ENCODE measurements at regions of chr1 and their contacts with region 1.

Region 1: DNA sequence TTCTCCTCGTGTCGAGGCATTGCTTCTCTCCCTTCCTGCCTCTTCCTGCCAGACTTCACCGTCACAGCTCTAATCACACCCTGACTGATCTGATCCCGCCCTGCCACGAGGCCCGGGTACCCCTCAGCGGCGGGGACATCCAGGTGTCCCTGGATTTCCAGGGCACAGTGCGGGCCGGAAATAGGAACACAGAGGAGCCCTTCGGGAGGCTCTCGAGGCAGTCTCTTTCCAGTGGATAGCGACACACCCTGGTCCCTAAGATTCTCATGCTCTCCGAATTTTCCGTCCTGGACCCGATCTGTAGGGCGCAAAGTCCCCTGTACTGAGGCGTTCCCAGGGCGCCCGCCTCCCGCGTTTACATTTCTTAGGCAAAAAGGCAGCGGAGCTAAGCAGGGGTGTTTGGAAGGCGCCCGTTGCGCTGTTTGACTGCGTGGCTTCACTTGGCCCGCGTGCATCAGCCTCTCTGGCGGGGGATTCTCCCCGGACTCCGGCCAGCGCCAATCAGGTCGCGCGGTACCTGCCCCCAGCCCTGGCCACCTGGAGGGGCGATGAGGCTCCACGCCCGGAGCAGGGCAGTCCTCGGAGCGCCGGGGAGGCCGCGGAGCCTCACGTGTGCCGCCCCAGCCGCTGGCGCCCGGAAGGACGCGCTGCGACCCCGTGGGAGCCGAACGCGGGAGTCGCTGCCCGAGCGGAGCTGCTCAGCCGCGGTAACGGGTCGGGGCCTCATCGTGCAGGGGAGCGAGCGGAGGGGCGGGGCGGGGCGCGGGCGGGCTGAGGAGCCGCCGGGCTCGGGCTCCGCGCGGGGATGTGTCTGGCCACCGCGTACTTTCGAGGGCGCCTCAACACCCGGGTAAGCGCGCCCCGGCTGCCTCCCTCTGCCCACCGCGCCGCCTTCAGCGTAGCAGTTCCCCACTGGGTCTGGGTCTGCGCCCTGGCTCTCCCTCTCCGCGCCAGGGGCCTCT is at the start of gene FAM163A:
- DNase-seq: no peak
- H3K4me3 Mint-ChIP-seq: peak within 1 kb of the TSS; percentile 69
- H3K27ac Mint-ChIP-seq: no peak within 1 kb of the TSS
- H3K4me1 Mint-ChIP-seq: peaks cover 9% of the 10 kb centered on the region
- H3K27me3 Mint-ChIP-seq: peaks cover 71% of the 10 kb centered on the region
- total RNA-seq, gene FAM163A: not detected in 2 replicates

Region 2: GRCh38 chr1:179917601-179918429 is 174.8 kb after region 1 on chr1:
- intact Hi-C with region 1: no loop called
- DNase-seq: no peak
- H3K4me3 Mint-ChIP-seq: no peak overlapping the region
- H3K27ac Mint-ChIP-seq: no peak overlapping the region
- H3K4me1 Mint-ChIP-seq: peaks cover 2% of the 10 kb centered on the region
- H3K27me3 Mint-ChIP-seq: no peaks in the 10 kb centered on the region

Region 3: GRCh38 chr1:180229974-180230790 is 487.2 kb after region 1 on chr1 and contains the start of gene LHX4:
- intact Hi-C with region 1: loop called (anchors 5 kb)
- DNase-seq: peak; percentile 74
- H3K4me3 Mint-ChIP-seq: peak within 1 kb of the TSS; percentile 79
- H3K27ac Mint-ChIP-seq: no peak within 1 kb of the TSS
- H3K4me1 Mint-ChIP-seq: peaks cover 20% of the 10 kb centered on the region
- H3K27me3 Mint-ChIP-seq: peaks cover 75% of the 10 kb centered on the region
- total RNA-seq, gene LHX4: not detected in 2 replicates

Measured in activated CD4-positive, alpha-beta T cell treated with anti-CD3 and anti-CD28 coated beads, Interleukin-2, amount 10 ng/mL, durations not matched to agents 24 days and 14 days (primary cell).